Activated CD8-positive, alpha-beta T cell treated with anti-CD3 and anti-CD28 coated beads, Interleukin-2, amount 10 ng/mL, durations not matched to agents 7 days and 5 days (primary cell): ENCODE measurements at regions of chr2 and their contacts with region 1.

Region 1: DNA sequence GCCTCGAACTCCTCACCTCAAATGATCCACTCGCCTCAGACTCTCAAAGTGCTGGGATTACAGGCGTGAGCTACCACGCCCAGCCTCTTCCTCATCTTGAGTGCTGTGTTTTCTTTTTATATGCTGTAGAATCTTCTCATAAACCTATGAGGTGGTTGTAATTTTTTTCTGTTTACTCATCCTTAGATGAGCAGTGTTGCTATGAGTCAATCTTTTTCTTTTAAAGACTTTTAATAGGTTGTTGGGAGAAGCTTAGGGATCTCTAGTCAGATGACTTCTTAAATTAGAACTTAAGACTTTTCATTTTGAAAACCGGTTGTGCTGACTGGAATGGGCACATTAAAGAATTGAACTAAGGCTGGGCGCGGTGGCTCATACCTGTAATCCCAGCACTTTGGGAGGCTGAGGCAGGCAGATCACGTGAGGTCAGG is 8.7 kb upstream of the AAK1 start:
- DNase-seq: peak; percentile 18
- ATAC-seq: no peak
- H3K4me3 Mint-ChIP-seq: no peak overlapping the region
- H3K27ac Mint-ChIP-seq: peak overlapping the region; percentile 73
- H3K4me1 Mint-ChIP-seq: peaks cover 50% of the 10 kb centered on the region
- H3K27me3 Mint-ChIP-seq: no peaks in the 10 kb centered on the region

Region 2: DNA sequence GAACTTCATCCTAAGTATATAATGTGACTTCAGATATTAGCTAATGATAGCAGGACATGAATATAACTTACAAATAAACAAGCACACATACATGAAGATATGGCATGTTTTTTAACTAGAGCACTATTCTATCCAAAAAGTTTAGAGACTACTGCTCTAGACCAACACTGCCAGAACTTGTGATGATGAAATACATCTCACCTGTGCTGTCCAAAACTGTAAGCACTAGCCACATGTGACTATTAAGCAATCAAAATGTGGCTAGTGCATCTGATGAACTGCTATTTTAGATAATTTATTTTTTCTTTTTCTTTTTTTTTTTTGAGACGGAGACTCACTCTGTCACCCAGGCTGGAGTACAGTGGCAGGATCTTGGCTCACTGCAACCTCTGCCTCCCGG is 15.8 kb before region 1 on chr2:
- CTCF ChIA-PET with region 1: interaction called, 12 read pairs
- POLR2A ChIA-PET with region 1: interaction called, 3 read pairs
- DNase-seq: no peak
- ATAC-seq: no peak
- H3K4me3 Mint-ChIP-seq: no peak overlapping the region
- H3K27ac Mint-ChIP-seq: no peak overlapping the region
- H3K4me1 Mint-ChIP-seq: peaks cover 66% of the 10 kb centered on the region
- H3K27me3 Mint-ChIP-seq: no peaks in the 10 kb centered on the region